AG04450 (cell line): ENCODE measurements at regions of chr6 and their contacts with region 1.

Region 1: GRCh38 chr6:16929809-16930208 is 168.5 kb upstream of the ATXN1 start:
- DNase-seq: peak; percentile 95
- H3K4me3 ChIP-seq: no peak overlapping the region
- H3K27ac ChIP-seq: no peak overlapping the region
- H3K27me3 ChIP-seq: no peaks in the 10 kb centered on the region
- CTCF ChIP-seq: no peak

Region 2: DNA sequence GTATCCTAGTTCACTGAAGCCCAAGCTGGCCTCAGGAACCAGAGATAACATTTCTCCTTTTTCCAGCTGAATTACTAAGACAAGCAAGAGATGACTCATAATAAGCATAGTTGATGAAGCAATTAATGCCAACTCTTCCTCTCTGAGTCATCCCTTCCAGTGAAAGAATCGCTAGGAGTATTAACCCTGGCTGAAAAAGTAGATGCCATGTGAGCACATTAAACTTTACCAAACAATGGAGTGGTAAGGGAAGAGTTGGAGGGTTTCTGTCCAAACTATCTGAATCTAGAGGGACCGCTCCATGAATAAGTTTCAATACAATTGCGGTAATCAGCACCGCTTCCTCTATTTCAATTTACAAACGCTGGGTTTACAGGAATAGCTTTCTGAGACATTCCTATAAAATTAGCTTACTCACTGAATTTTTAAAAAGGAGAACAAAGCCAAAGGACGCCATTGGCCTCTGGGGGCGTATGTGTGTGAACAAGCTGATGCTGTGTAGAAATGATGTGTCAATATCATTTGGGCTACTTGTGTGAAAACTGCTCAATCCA is 216.8 kb before region 1 on chr6:
- CTCF ChIA-PET with region 1: no interaction called
- POLR2A ChIA-PET with region 1: no interaction called
- DNase-seq: peak; percentile 66
- H3K4me3 ChIP-seq: peak overlapping the region; percentile 21
- H3K27ac ChIP-seq: peak overlapping the region; percentile 88
- H3K27me3 ChIP-seq: no peaks in the 10 kb centered on the region
- CTCF ChIP-seq: peak; percentile 51

Region 3: DNA sequence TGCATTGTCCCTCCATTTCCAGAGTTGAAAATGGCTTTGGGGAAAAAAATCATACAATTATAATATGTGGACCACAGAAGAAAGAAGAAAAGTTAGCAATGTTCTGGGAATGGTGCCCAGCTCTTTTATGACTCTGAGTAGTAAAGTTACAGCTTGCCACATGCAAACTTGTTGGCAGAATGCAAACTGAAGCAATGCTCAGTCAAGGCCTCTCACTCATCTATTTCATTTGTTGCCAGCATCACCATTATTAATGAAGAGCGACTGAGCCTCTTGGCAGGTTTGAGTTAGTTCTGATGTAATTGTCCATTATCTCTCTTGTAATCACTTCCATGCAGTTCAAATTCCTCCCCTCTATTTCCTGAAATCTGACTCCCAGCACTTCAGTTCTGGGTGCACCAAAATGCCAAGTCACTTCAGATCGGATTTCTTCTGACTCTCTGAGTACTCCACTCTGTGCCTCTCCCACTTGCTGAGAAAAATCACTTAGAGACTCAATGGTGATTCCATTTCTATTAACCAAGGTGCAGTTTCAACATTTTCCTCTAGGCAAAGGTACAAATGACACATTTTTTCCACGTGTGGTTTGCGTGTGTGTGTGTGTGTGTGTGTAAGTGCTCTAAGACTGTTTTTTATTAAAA is 17.7 kb after region 1 on chr6:
- CTCF ChIA-PET with region 1: interaction called, 5 read pairs
- POLR2A ChIA-PET with region 1: interaction called, 14 read pairs
- DNase-seq: peak; percentile 92
- H3K4me3 ChIP-seq: no peak overlapping the region; the same call in 1 of the 2 replicates
- H3K27ac ChIP-seq: peak overlapping the region; percentile 90
- H3K27me3 ChIP-seq: no peaks in the 10 kb centered on the region
- CTCF ChIP-seq: no peak

Region 4: DNA sequence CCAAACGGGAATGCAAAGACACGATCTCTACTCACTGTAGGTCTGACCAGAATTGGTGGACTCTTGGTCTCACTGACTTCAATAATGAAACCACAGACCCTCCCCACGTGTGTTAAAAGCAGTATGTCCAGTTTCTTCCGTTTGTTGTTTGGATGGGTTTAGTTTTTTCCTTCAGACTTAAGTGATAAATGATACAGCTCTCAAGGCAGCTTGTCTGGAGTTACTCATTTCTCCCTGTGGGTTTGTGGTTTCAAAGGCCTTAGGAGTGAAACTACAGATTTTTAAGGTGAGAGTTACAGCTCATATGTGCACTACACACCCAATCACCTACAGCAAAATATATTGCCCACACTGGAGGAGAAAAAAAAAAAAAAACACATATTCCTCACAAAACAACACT is 85.3 kb after region 1 on chr6:
- CTCF ChIA-PET with region 1: no interaction called
- POLR2A ChIA-PET with region 1: interaction called, 11 read pairs
- DNase-seq: no peak
- H3K4me3 ChIP-seq: no peak overlapping the region
- H3K27ac ChIP-seq: no peak overlapping the region
- H3K27me3 ChIP-seq: no peaks in the 10 kb centered on the region
- CTCF ChIP-seq: no peak

Region 5: GRCh38 chr6:17845598-17845997 is 915.8 kb after region 1 on chr6:
- CTCF ChIA-PET with region 1: no interaction called
- POLR2A ChIA-PET with region 1: no interaction called
- DNase-seq: no peak
- H3K4me3 ChIP-seq: no peak overlapping the region
- H3K27ac ChIP-seq: no peak overlapping the region
- H3K27me3 ChIP-seq: no peaks in the 10 kb centered on the region
- CTCF ChIP-seq: no peak